Naive thymus-derived CD4-positive, alpha-beta T cell (primary cell): ENCODE measurements at regions of chr2 and their contacts with region 1.

Region 1: DNA sequence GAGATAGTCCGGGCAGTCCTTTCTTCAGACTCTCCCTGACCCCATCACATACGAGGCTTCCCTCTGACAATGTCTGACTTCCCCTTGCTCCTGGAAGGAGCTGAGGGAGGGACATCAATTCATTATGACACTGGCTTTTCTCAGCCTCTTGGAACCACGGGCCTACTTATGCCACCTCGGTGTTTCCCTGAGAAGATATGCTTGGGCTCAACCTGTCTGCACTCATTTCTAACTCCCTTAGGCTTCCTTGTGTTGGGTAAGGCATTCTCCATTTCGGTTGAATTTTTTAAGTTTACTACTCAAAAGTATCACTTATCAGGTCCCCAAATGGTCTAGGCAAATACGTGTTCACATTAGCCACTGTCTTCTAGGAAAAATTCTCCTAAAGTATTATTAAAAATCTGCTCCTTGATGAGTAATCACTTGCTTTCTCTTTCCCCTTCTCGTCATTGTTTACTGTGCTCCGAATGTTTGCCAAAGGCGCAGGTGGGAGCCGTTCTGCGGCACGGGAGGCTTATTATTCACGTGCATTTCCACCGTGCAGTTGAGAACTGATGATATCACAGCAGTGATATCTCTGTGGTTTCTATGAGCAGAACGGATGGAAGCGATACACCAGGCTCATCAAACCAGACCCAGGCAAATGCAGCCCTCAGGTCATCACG is 33.1 kb downstream of the ARL4C start:
- DNase-seq: peak; percentile 36 to 91 (median 87)
- ATAC-seq: peak; percentile 93
- H3K4me3 ChIP-seq: peak overlapping the region; percentile 26
- H3K4me3 Mint-ChIP-seq: peak overlapping the region; percentile 45 to 84 (median 76)
- H3K27ac ChIP-seq: peak overlapping the region; percentile 93
- H3K27ac Mint-ChIP-seq: peak overlapping the region; percentile 94 to 100 (median 96)
- H3K4me1 ChIP-seq: peaks cover 60 to 63% of the 10 kb centered on the region in 2 donors
- H3K4me1 Mint-ChIP-seq: peaks cover 49 to 97% (median 79%) of the 10 kb centered on the region in 7 donors
- H3K27me3 ChIP-seq: no peaks in the 10 kb centered on the region
- H3K27me3 Mint-ChIP-seq: no peaks in the 10 kb centered on the region

Region 2: GRCh38 chr2:234478121-234478858 is 14.5 kb after region 1 on chr2:
- CTCF ChIA-PET with region 1: interaction called, 5 read pairs
- POLR2A ChIA-PET with region 1: interaction called, 21 read pairs
- intact Hi-C with region 1: loop called (anchors 1 kb)
- DNase-seq: no peak
- ATAC-seq: no peak
- H3K4me3 ChIP-seq: no peak overlapping the region
- H3K4me3 Mint-ChIP-seq: no peak overlapping the region
- H3K27ac ChIP-seq: no peak overlapping the region
- H3K27ac Mint-ChIP-seq: peak overlapping the region in 3 of 9 donors; percentile 50 to 76 (median 51)
- H3K4me1 ChIP-seq: peaks cover 18 to 37% of the 10 kb centered on the region in 2 donors
- H3K4me1 Mint-ChIP-seq: peaks cover 20 to 80% (median 56%) of the 10 kb centered on the region in 7 donors
- H3K27me3 ChIP-seq: no peaks in the 10 kb centered on the region
- H3K27me3 Mint-ChIP-seq: no peaks in the 10 kb centered on the region

Region 3: DNA sequence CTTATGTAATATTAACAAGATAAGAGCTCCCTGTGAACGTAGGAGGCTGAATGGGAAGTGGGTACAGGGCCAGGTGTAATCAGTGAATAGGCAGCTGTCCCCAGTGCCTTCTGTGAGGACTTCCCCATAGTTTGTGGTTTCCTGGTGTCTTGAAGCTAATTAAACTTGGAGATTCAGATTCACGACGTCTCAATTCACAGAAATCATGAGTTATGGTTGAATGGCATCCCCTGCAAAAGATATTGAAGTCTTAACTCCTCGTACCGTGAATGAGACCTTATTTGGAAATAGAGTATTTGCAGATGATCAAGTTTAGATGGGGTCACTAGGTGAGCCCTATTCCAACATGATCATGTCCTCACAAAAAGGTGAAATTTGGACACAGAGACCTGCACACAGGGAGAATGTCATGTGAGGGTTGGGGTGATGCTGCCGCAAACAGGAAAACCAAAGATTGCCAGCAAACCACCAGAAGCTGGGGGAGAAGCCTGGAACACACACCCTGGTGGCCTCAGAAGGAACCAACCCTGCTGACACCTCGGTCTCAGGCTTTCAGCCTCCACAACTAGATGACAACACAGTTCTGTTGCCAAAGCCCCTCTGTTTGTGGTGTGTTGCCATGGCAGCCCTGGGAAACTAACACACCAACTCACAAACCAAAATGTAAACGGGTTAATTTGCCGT is 20.0 kb after region 1 on chr2:
- CTCF ChIA-PET with region 1: interaction called, 5 read pairs
- POLR2A ChIA-PET with region 1: interaction called, 22 read pairs
- intact Hi-C with region 1: loop called (anchors 1 kb)
- DNase-seq: peak; percentile 50 to 88 (median 80)
- ATAC-seq: peak; percentile 89
- H3K4me3 ChIP-seq: peak overlapping the region; percentile 28
- H3K4me3 Mint-ChIP-seq: peak overlapping the region; percentile 60 to 81 (median 67)
- H3K27ac ChIP-seq: peak overlapping the region; percentile 94
- H3K27ac Mint-ChIP-seq: peak overlapping the region; percentile 87 to 99 (median 95)
- H3K4me1 ChIP-seq: peaks cover 63 to 72% of the 10 kb centered on the region in 2 donors
- H3K4me1 Mint-ChIP-seq: peaks cover 44 to 95% (median 84%) of the 10 kb centered on the region in 7 donors
- H3K27me3 ChIP-seq: no peaks in the 10 kb centered on the region
- H3K27me3 Mint-ChIP-seq: no peaks in the 10 kb centered on the region

Region 4: GRCh38 chr2:234488913-234489451 is 25.2 kb after region 1 on chr2:
- CTCF ChIA-PET with region 1: interaction called, 3 read pairs
- POLR2A ChIA-PET with region 1: interaction called, 338 read pairs
- intact Hi-C with region 1: loop called (anchors 1 kb)
- DNase-seq: peak in 8 of 9 donors; percentile 64 to 89 (median 82)
- ATAC-seq: peak; percentile 80
- H3K4me3 ChIP-seq: peak overlapping the region; percentile 48
- H3K4me3 Mint-ChIP-seq: peak overlapping the region; percentile 85 to 100 (median 96)
- H3K27ac ChIP-seq: peak overlapping the region; percentile 94
- H3K27ac Mint-ChIP-seq: peak overlapping the region; percentile 91 to 100 (median 98)
- H3K4me1 ChIP-seq: peaks cover 68 to 83% of the 10 kb centered on the region in 2 donors
- H3K4me1 Mint-ChIP-seq: peaks cover 39 to 84% (median 79%) of the 10 kb centered on the region in 7 donors
- H3K27me3 ChIP-seq: no peaks in the 10 kb centered on the region
- H3K27me3 Mint-ChIP-seq: peaks cover 0 to 2% (median 0%) of the 10 kb centered on the region in 5 donors

Region 5: GRCh38 chr2:234494361-234495250 is 30.8 kb after region 1 on chr2:
- CTCF ChIA-PET with region 1: interaction called, 4 read pairs
- POLR2A ChIA-PET with region 1: interaction called, 338 read pairs
- intact Hi-C with region 1: loop called (anchors 1 kb)
- DNase-seq: peak in 7 of 9 donors; percentile 51 to 67 (median 57)
- ATAC-seq: peak; percentile 14
- H3K4me3 ChIP-seq: peak overlapping the region; percentile 95
- H3K4me3 Mint-ChIP-seq: peak overlapping the region; percentile 96 to 100 (median 98)
- H3K27ac ChIP-seq: peak overlapping the region; percentile 94
- H3K27ac Mint-ChIP-seq: peak overlapping the region; percentile 91 to 100 (median 98)
- H3K4me1 ChIP-seq: peaks cover 34 to 46% of the 10 kb centered on the region in 2 donors
- H3K4me1 Mint-ChIP-seq: peaks cover 26 to 50% (median 43%) of the 10 kb centered on the region in 7 donors
- H3K27me3 ChIP-seq: no peaks in the 10 kb centered on the region
- H3K27me3 Mint-ChIP-seq: peaks cover 0 to 5% (median 0%) of the 10 kb centered on the region in 5 donors